HEK293 (cell line): ENCODE measurements at regions of chr3 and their contacts with region 1.

Region 1: GRCh38 chr3:66407611-66408218 is 93.1 kb downstream of the LRIG1 start:
- H3K4me3 ChIP-seq: no peak overlapping the region
- H3K27ac ChIP-seq: no peak overlapping the region
- H3K4me1 ChIP-seq: no peaks in the 10 kb centered on the region
- CTCF ChIP-seq: peak; percentile 51

Region 2: DNA sequence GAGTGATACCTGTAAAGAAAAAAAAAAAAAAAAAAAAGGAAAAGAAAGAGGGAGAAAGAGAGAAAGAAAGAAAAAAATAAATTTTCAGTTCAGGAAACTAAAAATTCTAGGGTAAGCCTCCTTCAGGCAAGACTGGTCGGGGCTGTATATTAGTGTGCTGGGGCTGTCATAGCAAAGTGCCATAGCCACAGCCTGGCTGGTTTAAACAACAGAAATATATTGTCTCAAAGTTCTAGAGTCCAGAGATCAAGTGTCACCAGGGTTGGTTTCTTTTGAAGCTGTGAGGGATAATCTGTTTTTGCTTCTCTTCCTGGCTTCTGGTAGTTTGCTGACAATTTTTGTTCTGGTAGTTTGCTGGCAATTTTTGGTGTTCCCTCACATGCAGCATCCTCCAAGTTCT is 235.3 kb before region 1 on chr3:
- CTCF ChIA-PET with region 1: no interaction called
- POLR2A ChIA-PET with region 1: no interaction called
- H3K4me3 ChIP-seq: no peak overlapping the region
- H3K27ac ChIP-seq: no peak overlapping the region
- H3K4me1 ChIP-seq: no peaks in the 10 kb centered on the region
- CTCF ChIP-seq: no peak

Region 3: GRCh38 chr3:66748175-66748876 is 340.6 kb after region 1 on chr3:
- CTCF ChIA-PET with region 1: interaction called, 10 read pairs
- POLR2A ChIA-PET with region 1: no interaction called
- H3K4me3 ChIP-seq: no peak overlapping the region
- H3K27ac ChIP-seq: no peak overlapping the region
- H3K4me1 ChIP-seq: no peaks in the 10 kb centered on the region
- CTCF ChIP-seq: no peak